OCI-LY7 (cell line): ENCODE measurements at regions of chr1 and their contacts with region 1.

Region 1: DNA sequence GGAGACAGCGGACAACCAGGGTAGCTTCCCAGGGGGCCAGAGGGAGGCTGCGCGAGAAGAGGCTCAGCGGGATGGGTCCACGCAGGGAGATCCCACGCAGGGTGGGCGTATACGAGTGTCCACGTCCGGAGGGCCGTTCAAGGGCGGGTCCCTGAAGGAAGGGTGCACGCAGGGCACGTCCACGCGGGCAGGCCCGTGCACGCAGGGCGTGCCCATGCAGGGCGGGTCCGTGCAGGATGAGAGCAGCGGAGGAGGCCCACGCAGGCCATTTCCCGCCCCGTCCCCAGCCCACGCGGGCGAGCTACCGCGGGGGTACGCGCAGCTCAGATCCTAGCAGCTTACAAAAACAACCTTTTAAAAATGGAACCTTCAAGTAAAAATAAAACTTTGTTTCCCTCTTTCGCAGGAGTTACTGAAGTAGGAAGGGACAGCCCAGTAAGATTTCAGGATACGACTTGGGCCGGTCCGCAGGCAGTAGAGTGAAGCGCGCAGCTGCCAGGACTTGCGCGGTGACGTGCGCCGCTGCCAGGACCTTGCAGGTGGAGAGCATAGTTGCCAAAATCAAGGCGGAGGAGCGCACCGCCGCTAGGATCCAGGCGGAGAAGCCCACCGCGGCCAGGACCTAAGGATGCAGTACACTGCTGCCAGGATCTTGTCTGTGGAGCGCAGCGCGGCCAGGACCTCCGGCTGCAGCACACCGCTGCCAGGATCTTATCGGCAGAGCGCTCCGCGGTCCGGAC is 416 bp upstream of the RNF187 start:
- DNase-seq: peak; percentile 94
- H3K4me3 ChIP-seq: peak overlapping the region; percentile 97
- H3K27ac ChIP-seq: peak overlapping the region; percentile 92
- H3K4me1 ChIP-seq: peaks cover 41% of the 10 kb centered on the region
- CTCF ChIP-seq: no peak

Region 2: GRCh38 chr1:228073857-228074545 is 412.8 kb before region 1 on chr1:
- CTCF ChIA-PET with region 1: interaction called, 33 read pairs
- POLR2A ChIA-PET with region 1: no interaction called
- intact Hi-C with region 1: no loop called
- DNase-seq: peak; percentile 40
- H3K4me3 ChIP-seq: no peak overlapping the region
- H3K27ac ChIP-seq: no peak overlapping the region
- H3K4me1 ChIP-seq: no peaks in the 10 kb centered on the region
- CTCF ChIP-seq: peak; percentile 61

Region 3: DNA sequence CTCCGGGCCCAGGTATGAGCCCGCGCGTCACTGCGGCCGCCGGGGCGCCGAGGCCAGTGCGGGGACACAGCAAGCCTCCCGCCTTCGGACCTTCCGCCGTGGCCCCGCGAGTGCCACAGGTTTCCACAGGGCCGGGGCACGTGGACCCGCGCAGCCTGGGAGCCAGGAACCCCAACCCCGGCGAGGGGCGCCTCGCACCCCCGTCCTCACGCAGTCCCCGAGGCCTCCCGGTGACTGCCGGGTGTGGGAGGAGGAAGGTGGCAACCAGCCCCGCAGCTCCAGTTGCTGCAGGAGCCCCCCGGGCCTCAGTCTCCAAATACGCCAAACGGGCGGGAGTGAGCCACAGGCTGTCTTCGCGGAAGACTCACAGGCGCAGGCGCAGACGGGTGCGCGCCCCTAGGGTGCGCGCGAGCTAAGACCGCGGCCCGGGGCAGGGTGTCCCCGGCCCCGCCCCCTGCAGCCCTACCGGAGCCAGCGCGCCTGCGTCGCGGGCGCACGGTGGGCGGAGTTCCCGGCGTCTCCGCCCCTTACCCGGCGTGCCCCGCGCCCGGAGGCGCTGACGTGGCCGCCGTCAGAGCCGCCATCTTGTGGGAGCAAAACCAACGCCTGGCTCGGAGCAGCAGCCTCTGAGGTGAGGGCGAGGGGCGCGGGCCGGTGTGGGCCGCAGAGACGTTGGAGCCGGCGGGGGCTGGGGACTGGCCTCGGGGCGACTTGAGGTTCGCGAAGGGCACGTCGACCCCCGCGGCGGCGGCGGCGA is 404.5 kb before region 1 on chr1 and contains the start of gene ARF1:
- CTCF ChIA-PET with region 1: interaction called, 33 read pairs
- POLR2A ChIA-PET with region 1: no interaction called
- intact Hi-C with region 1: loop called (anchors 1 kb)
- DNase-seq: peak; percentile 97
- H3K4me3 ChIP-seq: peak within 1 kb of the TSS; percentile 84
- H3K27ac ChIP-seq: peak within 1 kb of the TSS; percentile 62
- H3K4me1 ChIP-seq: peaks cover 29% of the 10 kb centered on the region
- CTCF ChIP-seq: no peak
- total RNA-seq, gene ARF1: 125 and 163 TPM in 2 replicates

Region 4: DNA sequence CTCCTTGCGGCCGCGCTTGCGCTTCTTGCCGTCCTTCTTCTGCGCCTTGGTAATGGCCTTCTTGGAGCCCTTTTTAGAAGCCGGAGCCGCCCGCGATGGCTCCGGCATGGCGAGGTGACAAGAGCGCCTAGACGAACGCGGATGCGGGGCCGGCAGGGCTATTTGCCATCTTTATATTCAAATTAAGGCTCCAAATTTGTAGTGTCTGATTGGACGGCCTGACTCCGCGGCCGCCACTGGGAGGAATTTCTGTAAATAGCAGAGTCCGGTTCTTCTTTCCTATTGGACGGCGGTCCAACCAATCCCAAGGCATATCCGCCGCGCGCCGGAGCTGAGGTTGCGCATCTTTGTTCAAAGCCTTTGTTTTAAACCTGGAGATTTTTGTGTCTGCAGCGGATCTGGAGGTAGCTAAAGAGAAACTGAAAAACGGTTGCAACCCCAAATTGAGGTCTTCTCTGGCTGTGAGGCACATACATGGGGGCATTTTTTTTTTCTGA is 22.2 kb before region 1 on chr1:
- CTCF ChIA-PET with region 1: no interaction called
- POLR2A ChIA-PET with region 1: interaction called, 74 read pairs
- intact Hi-C with region 1: loop called (anchors 1 kb)
- DNase-seq: peak; percentile 98
- H3K4me3 ChIP-seq: peak overlapping the region; percentile 95
- H3K27ac ChIP-seq: peak overlapping the region; percentile 95
- H3K4me1 ChIP-seq: peaks cover 55% of the 10 kb centered on the region
- CTCF ChIP-seq: no peak

Region 5: DNA sequence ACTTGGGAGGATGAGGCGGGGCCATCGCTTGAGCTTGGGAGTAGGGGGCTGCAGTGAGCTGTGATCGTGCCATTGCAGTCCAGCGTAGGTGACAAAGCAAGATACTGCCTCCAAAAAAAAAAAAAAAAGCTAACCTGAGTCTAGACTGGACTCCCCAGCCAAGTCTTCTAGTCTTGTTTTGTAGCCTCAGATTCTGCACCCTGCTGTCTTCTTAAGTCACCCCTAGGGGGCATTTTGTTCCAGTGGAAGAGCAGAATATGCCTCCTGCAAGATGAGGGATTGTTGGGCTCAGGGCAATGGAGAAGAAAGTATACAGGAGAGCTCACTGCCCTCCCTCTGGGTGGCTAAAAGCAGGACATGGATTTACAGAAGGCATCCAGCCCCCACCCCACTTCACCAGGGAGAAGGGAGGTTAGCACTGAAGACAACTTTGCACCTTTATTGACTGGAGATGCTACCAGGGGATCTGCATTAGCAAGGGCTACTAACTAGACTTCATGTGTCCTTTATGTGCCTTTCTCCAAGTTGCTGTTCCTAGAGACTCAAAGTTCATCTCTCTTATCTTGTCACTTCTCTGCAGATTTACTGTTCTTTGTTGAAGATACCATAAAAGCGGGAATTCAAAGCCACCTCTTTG is 14.9 kb before region 1 on chr1:
- CTCF ChIA-PET with region 1: interaction called, 4 read pairs
- POLR2A ChIA-PET with region 1: interaction called, 24 read pairs
- intact Hi-C with region 1: no loop called
- DNase-seq: peak; percentile 85
- H3K4me3 ChIP-seq: no peak overlapping the region
- H3K27ac ChIP-seq: no peak overlapping the region
- H3K4me1 ChIP-seq: peaks cover 3% of the 10 kb centered on the region
- CTCF ChIP-seq: peak; percentile 87

Region 6: DNA sequence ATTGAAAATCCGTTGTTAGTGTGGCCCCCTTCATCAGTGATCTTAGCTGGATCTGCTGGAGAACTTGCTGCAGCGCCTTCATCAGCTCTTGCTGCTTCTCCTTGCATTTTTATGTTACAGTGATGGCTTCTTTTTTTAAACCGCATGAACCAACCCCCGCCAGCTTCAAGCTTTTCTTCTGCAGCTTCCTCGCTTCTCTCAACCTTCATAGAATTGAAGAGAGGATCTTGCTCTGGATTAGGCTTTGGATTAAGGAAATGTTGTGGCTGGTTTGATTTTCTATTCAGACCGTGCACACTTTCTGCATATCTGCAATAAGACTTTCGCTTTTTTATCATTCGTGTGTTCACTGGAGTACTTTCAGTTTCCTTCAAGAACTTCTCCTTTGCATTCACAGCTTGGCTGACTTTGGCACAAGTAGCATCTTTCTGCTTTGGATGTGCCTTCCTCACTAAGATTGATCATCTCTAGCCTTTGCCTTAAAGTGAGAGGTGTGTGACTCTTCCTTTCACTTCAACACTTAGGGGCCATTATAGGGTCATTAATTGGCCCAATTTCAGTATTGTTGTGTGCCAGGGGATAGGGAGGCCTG is 13.5 kb after region 1 on chr1:
- CTCF ChIA-PET with region 1: interaction called, 5 read pairs
- POLR2A ChIA-PET with region 1: interaction called, 16 read pairs
- intact Hi-C with region 1: no loop called
- DNase-seq: peak; percentile 65
- H3K4me3 ChIP-seq: peak overlapping the region; percentile 50
- H3K27ac ChIP-seq: peak overlapping the region; percentile 37
- H3K4me1 ChIP-seq: peaks cover 18% of the 10 kb centered on the region
- CTCF ChIP-seq: no peak

Region 7: DNA sequence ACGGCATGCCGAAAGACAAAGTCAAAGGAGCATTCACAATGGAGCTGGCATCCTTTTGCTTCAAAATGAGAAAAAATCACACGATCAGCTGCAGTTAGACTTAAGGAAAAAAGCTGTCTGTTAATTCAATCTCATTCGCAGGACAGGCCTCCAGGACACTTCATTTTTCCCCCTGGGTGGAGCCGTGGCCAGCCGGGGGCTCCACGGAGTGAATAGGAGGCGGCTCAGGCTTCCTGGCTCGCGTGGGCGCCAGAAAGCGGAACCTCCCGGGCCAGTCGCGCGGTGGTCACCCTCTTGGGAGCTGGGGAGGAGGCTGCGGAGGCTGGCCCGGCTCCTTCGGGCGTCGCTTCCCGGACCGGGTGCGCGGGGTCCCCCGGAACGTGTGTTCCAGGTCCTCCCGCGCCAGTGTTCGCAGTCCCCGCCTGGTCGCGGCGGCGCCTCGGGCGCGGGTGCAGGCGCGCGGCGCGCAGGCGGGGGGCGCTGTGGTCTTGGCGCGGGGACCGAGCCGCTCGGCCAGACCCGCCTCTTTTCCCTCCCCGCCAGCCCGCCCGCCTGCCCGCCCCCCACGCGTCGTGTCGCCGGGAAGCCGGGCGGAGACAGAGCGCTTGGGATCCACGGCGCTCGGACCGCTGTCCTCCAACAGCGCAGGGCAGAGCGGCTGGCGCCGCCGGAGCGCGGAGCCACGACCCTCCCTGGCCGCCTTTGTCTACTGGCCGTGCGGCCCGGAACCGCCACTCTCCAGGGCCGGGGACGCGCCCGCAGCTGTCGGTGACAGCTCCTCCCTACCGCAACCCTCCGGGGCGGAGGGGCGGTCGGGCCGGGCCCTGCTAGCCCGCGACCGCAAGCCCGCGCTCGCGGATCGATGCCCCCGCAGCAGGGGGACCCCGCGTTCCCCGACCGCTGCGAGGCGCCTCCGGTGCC is 248.4 kb after region 1 on chr1 and contains the start of gene RHOU:
- CTCF ChIA-PET with region 1: no interaction called
- POLR2A ChIA-PET with region 1: no interaction called
- intact Hi-C with region 1: no loop called
- DNase-seq: no peak
- H3K4me3 ChIP-seq: no peak within 1 kb of the TSS
- H3K27ac ChIP-seq: no peak within 1 kb of the TSS
- H3K4me1 ChIP-seq: no peaks in the 10 kb centered on the region
- CTCF ChIP-seq: no peak
- total RNA-seq, gene RHOU: not detected in 2 replicates